ENCODE measurements at regions of chr9 and their contacts with region 1.

Region 1: GRCh38 chr9:117704024-117704575 is at the start of gene TLR4:
- DNase-seq: peak; percentile 91 to 98 (median 96)
- H3K4me3 ChIP-seq: peak within 1 kb of the TSS; percentile 81 to 90 (median 87)
- H3K4me3 Mint-ChIP-seq: peak within 1 kb of the TSS; percentile 96 to 99
- H3K27ac ChIP-seq: peak within 1 kb of the TSS; percentile 94 to 95
- H3K27ac Mint-ChIP-seq: peak within 1 kb of the TSS; percentile 95 to 98 (median 98)
- H3K4me1 ChIP-seq: peaks cover 47 to 58% of the 10 kb centered on the region in 2 donors
- H3K4me1 Mint-ChIP-seq: peaks cover 59% of the 10 kb centered on the region
- H3K27me3 ChIP-seq: no peaks in the 10 kb centered on the region
- H3K27me3 Mint-ChIP-seq: no peaks in the 10 kb centered on the region
- CTCF ChIP-seq: no peak
- polyA plus RNA-seq, gene TLR4: 34.0 to 214 (median 174) TPM

Region 2: DNA sequence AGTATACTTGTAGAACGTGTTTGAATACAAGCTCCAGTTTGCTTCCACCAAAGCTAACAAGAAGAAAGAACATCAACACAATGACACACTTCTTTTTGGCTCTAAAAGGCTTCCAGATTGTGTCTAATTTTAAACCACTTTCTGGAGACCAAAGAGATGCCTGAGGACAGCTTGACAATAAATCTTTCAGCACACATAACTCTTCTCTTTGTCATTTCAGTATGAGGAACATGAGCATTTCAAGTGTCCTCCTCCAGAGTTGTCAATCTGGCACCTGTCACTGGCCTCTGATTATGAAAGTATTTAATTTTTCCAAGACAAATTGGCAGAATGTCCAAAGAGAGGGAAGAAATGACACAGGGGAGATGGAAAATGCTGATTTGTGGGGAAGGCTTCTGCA is 78.9 kb before region 1 on chr9:
- intact Hi-C with region 1: no loop called
- DNase-seq: no peak
- H3K4me3 ChIP-seq: no peak overlapping the region
- H3K4me3 Mint-ChIP-seq: no peak overlapping the region
- H3K27ac ChIP-seq: no peak overlapping the region
- H3K27ac Mint-ChIP-seq: no peak overlapping the region
- H3K4me1 ChIP-seq: no peaks in the 10 kb centered on the region
- H3K4me1 Mint-ChIP-seq: no peaks in the 10 kb centered on the region
- H3K27me3 ChIP-seq: peaks cover 0 to 2% of the 10 kb centered on the region in 2 donors
- H3K27me3 Mint-ChIP-seq: peaks cover 0 to 7% (median 2%) of the 10 kb centered on the region in 3 donors
- CTCF ChIP-seq: no peak

Region 3: GRCh38 chr9:117636681-117637080 is 67.4 kb before region 1 on chr9:
- intact Hi-C with region 1: no loop called
- DNase-seq: no peak
- H3K4me3 ChIP-seq: no peak overlapping the region
- H3K4me3 Mint-ChIP-seq: no peak overlapping the region
- H3K27ac ChIP-seq: no peak overlapping the region
- H3K27ac Mint-ChIP-seq: no peak overlapping the region
- H3K4me1 ChIP-seq: no peaks in the 10 kb centered on the region
- H3K4me1 Mint-ChIP-seq: no peaks in the 10 kb centered on the region
- H3K27me3 ChIP-seq: peaks cover 12% of the 10 kb centered on the region in 2 donors
- H3K27me3 Mint-ChIP-seq: peaks cover 10 to 26% (median 15%) of the 10 kb centered on the region in 3 donors
- CTCF ChIP-seq: no peak

Region 4: DNA sequence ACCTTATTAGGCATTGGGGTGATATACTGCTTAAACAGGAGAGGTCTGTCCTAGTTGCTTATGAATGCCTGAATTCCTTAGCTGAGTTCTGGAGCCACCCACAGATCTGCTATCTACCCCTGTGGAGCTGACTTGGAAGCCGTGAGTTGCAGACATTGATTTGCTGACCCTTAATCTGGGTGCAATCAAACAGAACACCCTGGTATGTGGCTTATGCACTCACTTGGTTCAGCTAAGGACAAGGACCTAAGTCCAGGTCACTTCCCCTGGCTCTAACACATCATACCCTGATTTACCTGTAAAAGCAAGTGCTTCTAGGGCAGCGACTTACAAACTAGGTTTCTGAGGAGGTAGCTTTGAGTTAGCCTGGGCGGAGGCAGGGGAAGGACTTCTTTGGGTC is 41.4 kb before region 1 on chr9:
- intact Hi-C with region 1: no loop called
- DNase-seq: no peak
- H3K4me3 ChIP-seq: no peak overlapping the region
- H3K4me3 Mint-ChIP-seq: no peak overlapping the region
- H3K27ac ChIP-seq: no peak overlapping the region
- H3K27ac Mint-ChIP-seq: no peak overlapping the region
- H3K4me1 ChIP-seq: no peaks in the 10 kb centered on the region
- H3K4me1 Mint-ChIP-seq: no peaks in the 10 kb centered on the region
- H3K27me3 ChIP-seq: peaks cover 0 to 2% of the 10 kb centered on the region in 2 donors
- H3K27me3 Mint-ChIP-seq: peaks cover 0 to 10% (median 8%) of the 10 kb centered on the region in 3 donors
- CTCF ChIP-seq: no peak

Region 5: DNA sequence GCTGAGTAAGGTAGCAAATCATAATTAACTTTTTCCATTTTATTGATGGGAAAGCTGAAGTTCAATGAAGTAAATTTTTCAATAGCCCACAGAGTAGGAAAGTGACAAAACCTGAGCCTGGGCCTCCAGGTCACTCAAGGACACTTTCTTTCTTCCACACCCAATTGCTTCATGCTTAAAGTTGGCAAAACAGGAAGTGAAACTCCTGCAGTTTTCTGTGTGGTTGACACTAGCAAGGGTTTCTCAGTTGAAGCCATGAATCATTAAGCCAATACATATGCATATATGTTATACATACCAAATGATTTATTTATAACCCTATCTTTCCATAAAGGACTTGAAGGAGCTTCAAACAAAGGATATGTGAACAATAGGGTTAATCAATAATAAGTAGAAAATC is 14.0 kb after region 1 on chr9:
- intact Hi-C with region 1: loop called in 1 of 2 experiments (anchors 2 kb)
- DNase-seq: peak; percentile 88 to 98 (median 95)
- H3K4me3 ChIP-seq: peak overlapping the region in 2 of 3 experiments; percentile 16 to 59
- H3K4me3 Mint-ChIP-seq: no peak overlapping the region
- H3K27ac ChIP-seq: peak overlapping the region in 1 of 2 donors; percentile 83
- H3K27ac Mint-ChIP-seq: peak overlapping the region; percentile 80 to 93 (median 90)
- H3K4me1 ChIP-seq: peaks cover 93 to 100% of the 10 kb centered on the region in 2 donors
- H3K4me1 Mint-ChIP-seq: peaks cover 91% of the 10 kb centered on the region
- H3K27me3 ChIP-seq: no peaks in the 10 kb centered on the region
- H3K27me3 Mint-ChIP-seq: no peaks in the 10 kb centered on the region
- CTCF ChIP-seq: no peak

Region 6: GRCh38 chr9:117725426-117725887 is 21.4 kb after region 1 on chr9:
- intact Hi-C with region 1: loop called in 1 of 2 experiments (anchors 2 kb)
- DNase-seq: peak; percentile 61 to 90 (median 81)
- H3K4me3 ChIP-seq: peak overlapping the region in 2 of 3 experiments; percentile 32 to 59
- H3K4me3 Mint-ChIP-seq: peak overlapping the region; percentile 42 to 67
- H3K27ac ChIP-seq: peak overlapping the region; percentile 85 to 89
- H3K27ac Mint-ChIP-seq: peak overlapping the region; percentile 79 to 99 (median 96)
- H3K4me1 ChIP-seq: peaks cover 81 to 85% of the 10 kb centered on the region in 2 donors
- H3K4me1 Mint-ChIP-seq: peaks cover 89% of the 10 kb centered on the region
- H3K27me3 ChIP-seq: no peaks in the 10 kb centered on the region
- H3K27me3 Mint-ChIP-seq: peaks cover 0 to 4% (median 0%) of the 10 kb centered on the region in 3 donors
- CTCF ChIP-seq: no peak

Region 7: DNA sequence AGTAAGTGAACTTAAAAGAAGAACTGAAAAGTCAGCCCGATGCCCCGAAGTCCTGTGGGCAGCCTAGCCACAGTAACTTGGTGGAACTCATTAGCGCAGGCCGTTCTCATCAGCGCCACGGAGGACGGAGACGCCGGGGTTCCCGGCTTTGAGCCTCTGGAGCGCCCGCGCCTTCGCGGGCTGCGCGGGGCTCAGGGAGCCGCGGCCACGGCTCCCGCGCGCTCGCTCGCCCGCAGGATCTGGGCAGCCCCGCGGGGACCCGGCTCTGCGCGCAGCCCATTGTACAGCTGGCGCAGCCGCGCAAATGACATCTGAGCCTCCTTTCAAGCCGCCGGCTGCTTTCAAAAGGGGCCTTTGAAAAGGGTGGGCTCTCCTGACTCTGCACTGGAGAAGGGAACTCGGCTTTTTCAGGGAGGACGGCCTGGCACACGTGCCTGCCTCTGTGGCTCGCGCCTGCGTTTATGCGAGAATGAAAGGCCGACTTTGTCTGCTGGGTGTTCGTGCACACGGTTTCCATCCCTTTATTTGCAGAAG is 40.8 kb after region 1 on chr9:
- intact Hi-C with region 1: no loop called
- DNase-seq: peak in 2 of 3 donors; percentile 25 to 41
- H3K4me3 ChIP-seq: peak overlapping the region; percentile 28 to 79 (median 41)
- H3K4me3 Mint-ChIP-seq: peak overlapping the region; percentile 82 to 92
- H3K27ac ChIP-seq: no peak overlapping the region
- H3K27ac Mint-ChIP-seq: peak overlapping the region in 3 of 7 donors; percentile 47 to 73 (median 67)
- H3K4me1 ChIP-seq: peaks cover 20% of the 10 kb centered on the region in 2 donors
- H3K4me1 Mint-ChIP-seq: peaks cover 21% of the 10 kb centered on the region
- H3K27me3 ChIP-seq: peaks cover 2 to 3% of the 10 kb centered on the region in 2 donors
- H3K27me3 Mint-ChIP-seq: peaks cover 7 to 13% (median 8%) of the 10 kb centered on the region in 3 donors
- CTCF ChIP-seq: no peak

Region 8: DNA sequence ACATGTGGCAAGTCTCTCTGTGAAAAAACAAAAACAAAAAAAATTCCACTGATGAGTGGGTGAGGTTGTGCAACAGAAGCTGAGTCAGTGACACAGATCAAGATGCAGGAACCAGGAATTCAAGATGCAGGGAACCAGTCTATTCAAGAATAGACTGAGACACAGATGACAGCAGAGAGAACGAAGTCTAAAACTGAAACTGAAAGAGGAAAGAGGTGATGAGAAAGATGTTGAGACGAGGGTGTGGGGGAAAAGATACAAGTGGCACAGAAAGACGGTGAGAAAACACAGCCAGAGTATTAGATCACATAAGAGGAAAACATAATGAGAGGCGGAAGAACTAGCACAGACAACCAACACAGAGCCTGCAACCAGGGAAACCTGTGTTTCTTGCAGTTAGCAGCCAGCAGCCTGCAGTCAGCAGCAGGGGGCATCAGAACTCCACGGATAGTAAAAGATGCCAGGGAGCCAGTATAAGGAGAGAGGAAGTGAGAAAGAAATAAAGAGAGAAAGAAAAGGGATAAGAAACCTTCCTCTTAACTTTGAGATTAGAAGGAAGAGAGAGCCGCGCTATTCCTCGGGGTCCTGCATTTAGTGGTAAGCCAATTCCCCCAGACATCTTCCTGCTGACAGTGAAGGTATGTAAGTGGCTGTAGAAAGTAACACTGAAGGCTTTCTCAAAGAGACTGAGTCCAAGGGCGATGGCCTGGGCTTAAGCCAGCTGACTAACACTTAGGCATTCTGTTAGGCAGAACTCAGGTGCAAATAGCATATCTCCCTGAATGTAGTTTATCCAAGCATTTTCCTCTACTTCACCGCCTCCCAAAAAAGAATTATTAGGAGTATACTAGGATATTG is 79.1 kb after region 1 on chr9:
- intact Hi-C with region 1: loop called in 1 of 2 experiments (anchors 10 kb)
- DNase-seq: peak; percentile 80 to 95 (median 88)
- H3K4me3 ChIP-seq: peak overlapping the region; percentile 46 to 97 (median 73)
- H3K4me3 Mint-ChIP-seq: no peak overlapping the region
- H3K27ac ChIP-seq: peak overlapping the region; percentile 73 to 83
- H3K27ac Mint-ChIP-seq: no peak overlapping the region
- H3K4me1 ChIP-seq: peaks cover 40 to 47% of the 10 kb centered on the region in 2 donors
- H3K4me1 Mint-ChIP-seq: peaks cover 32% of the 10 kb centered on the region
- H3K27me3 ChIP-seq: no peaks in the 10 kb centered on the region
- H3K27me3 Mint-ChIP-seq: peaks cover 0 to 3% (median 1%) of the 10 kb centered on the region in 3 donors
- CTCF ChIP-seq: peak; percentile 94